ENCODE measurements at regions of chr19 and their contacts with region 1.

Region 1: DNA sequence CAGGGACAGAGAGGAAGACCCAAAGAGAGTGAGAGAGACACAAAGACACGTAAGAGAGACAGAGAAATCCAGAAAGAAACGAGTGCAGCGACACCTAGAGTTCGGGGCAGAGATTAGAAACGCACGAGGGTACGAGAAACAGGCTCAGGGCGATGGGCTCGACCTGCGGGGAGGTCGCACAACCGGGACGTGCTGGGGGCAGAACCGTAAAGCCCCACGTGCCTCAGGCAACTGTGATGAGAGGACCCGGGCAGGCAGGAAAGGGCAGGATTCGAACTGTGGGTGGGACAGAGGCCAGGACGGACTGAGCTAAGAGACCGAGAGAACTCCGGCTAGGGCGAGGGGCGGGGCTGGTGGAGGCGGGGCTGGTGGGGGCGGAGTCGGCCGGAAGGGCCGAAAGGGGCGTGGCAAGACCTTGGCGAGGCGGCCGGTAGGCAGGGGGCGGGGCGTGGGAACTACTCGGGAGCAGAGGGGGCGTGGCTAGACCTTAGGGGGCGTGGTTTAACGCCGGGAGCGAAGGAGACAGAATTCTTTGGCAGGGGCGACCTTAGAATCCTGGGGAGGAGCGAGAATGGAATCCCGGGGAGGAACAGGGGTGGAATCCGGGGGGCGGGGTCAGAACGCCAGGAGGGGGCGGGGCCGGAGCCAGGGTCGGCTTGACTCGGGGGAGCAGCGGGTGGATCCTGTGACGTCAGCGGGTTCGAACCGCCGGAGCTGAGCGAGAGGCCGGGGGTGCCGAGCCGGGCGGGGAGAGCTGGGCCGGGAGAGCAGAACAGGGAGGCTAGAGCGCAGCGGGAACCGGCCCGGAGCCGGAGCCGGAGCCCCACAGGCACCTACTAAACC is at the start of gene NECTIN2:
- DNase-seq: peak; percentile 100
- H3K4me3 ChIP-seq: peak within 1 kb of the TSS; percentile 83 to 100 (median 96)
- H3K27ac ChIP-seq: peak within 1 kb of the TSS; percentile 94 to 98 (median 96)
- H3K4me1 ChIP-seq: peaks cover 0 to 58% (median 39%) of the 10 kb centered on the region in 4 donors
- H3K27me3 ChIP-seq: no peaks in the 10 kb centered on the region
- CTCF ChIP-seq: peak; percentile 56 to 88 (median 82)
- EP300 ChIP-seq: no peak
- POLR2A ChIP-seq: peak; percentile 83 to 88
- total RNA-seq, gene NECTIN2: 16.3 to 39.6 (median 27.3) TPM

Region 2: GRCh38 chr19:44746946-44747738 is 98.7 kb before region 1 on chr19:
- intact Hi-C with region 1: loop called (anchors 5 kb)
- DNase-seq: peak; percentile 98
- H3K4me3 ChIP-seq: peak overlapping the region; percentile 59 to 83 (median 76)
- H3K27ac ChIP-seq: peak overlapping the region; percentile 90 to 98 (median 94)
- H3K4me1 ChIP-seq: peaks cover 0 to 89% (median 79%) of the 10 kb centered on the region in 4 donors
- H3K27me3 ChIP-seq: no peaks in the 10 kb centered on the region
- CTCF ChIP-seq: no peak
- EP300 ChIP-seq: peak in 3 of 4 donors; percentile 36 to 87 (median 61)
- POLR2A ChIP-seq: peak; percentile 58 to 76

Region 3: DNA sequence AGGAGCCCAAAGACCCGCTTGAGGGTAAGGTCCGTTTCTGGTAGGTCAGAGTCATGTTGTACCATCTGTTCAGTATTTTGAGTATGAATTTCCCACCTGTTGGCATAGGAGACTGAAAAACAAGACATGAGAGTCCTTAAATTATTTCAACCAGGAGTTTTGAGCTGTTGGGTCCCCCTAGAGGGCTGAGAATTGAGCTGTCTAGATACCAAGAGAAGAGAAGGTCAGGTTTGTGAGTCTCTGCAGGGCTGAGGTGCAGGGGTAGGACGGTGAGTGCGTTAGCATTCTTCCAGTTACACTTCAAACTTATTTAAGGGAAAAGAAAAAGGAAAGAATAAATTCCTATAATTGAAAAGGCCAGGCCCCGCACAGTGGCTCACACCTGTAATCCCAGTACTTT is 63.1 kb before region 1 on chr19:
- intact Hi-C with region 1: loop called (anchors 1 kb)
- DNase-seq: no peak
- H3K4me3 ChIP-seq: no peak overlapping the region
- H3K27ac ChIP-seq: no peak overlapping the region
- H3K4me1 ChIP-seq: peaks cover 0 to 4% (median 2%) of the 10 kb centered on the region in 4 donors
- H3K27me3 ChIP-seq: peaks cover 4 to 11% (median 5%) of the 10 kb centered on the region in 3 donors
- CTCF ChIP-seq: no peak
- EP300 ChIP-seq: no peak
- POLR2A ChIP-seq: no peak

Region 4: DNA sequence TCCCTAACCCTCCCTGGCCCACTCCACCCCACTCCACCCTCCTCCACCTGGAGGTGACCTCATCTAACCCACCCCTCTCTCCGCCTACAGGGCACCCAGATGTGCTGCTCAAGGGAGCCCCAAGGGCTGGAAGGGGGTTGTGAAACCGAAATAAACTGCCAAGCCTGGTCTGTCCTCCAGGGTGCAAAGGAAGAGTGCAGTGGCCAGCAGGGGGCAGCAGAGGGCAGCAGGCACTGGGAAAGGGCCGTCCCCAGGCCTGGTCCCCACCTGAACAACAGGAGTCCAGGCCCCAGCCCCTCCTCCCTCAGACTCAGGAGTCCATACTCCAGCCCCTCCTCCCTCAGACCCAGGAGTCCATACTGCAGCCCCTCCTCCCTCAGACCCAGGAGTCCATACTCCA is 45.4 kb before region 1 on chr19:
- intact Hi-C with region 1: loop called (anchors 1 kb)
- DNase-seq: peak; percentile 91
- H3K4me3 ChIP-seq: no peak overlapping the region
- H3K27ac ChIP-seq: no peak overlapping the region
- H3K4me1 ChIP-seq: no peaks in the 10 kb centered on the region
- H3K27me3 ChIP-seq: no peaks in the 10 kb centered on the region
- CTCF ChIP-seq: peak; percentile 91 to 97 (median 94)
- EP300 ChIP-seq: no peak
- POLR2A ChIP-seq: no peak

Region 5: GRCh38 chr19:44808463-44809371 is 37.1 kb before region 1 on chr19 and contains the start of gene BCAM:
- intact Hi-C with region 1: loop called (anchors 2 kb)
- DNase-seq: peak; percentile 91
- H3K4me3 ChIP-seq: peak within 1 kb of the TSS; percentile 34 to 55 (median 52)
- H3K27ac ChIP-seq: peak within 1 kb of the TSS; percentile 49 to 77 (median 59)
- H3K4me1 ChIP-seq: peaks cover 0 to 28% (median 20%) of the 10 kb centered on the region in 4 donors
- H3K27me3 ChIP-seq: no peaks in the 10 kb centered on the region
- CTCF ChIP-seq: no peak
- EP300 ChIP-seq: no peak
- POLR2A ChIP-seq: no peak
- total RNA-seq, gene BCAM: 6.1 to 36.3 (median 13.4) TPM

Region 6: GRCh38 chr19:44890366-44891015 is 44.7 kb after region 1 on chr19:
- intact Hi-C with region 1: loop called (anchors 2 kb)
- DNase-seq: no peak
- H3K4me3 ChIP-seq: peak overlapping the region; percentile 50 to 65 (median 58)
- H3K27ac ChIP-seq: peak overlapping the region; percentile 91 to 96 (median 94)
- H3K4me1 ChIP-seq: peaks cover 0 to 26% (median 24%) of the 10 kb centered on the region in 4 donors
- H3K27me3 ChIP-seq: no peaks in the 10 kb centered on the region
- CTCF ChIP-seq: no peak
- EP300 ChIP-seq: peak in 1 of 4 donors; percentile 75
- POLR2A ChIP-seq: no peak

Region 7: DNA sequence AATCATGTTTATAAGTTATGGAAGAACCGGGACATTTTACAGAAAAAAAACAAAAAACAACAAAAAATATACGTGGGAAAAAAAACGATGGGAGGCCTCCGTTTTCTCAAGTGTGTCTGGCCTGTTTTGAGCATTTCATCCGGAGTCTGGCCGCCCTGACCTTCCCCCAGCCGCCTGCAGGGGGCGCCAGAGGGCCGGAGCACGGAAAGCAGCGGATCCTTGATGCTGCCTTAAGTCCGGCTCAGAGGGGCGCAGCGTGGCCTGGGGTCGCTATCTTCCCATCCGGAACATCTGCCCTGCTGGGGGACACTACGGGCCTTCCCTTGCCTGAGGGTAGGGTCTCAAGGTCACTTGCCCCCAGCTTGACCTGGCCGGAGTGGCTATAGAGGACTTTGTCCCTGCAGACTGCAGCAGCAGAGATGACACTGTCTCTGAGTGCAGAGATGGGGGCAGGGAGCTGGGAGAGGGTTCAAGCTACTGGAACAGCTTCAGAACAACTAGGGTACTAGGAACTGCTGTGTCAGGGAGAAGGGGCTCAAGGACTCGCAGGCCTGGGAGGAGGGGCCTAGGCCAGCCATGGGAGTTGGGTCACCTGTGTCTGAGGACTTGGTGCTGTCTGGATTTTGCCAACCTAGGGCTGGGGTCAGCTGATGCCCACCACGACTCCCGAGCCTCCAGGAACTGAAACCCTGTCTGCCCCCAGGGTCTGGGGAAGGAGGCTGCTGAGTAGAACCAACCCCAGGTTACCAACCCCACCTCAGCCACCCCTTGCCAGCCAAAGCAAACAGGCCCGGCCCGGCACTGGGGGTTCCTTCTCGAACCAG is 58.0 kb after region 1 on chr19:
- intact Hi-C with region 1: no loop called
- DNase-seq: peak; percentile 82
- H3K4me3 ChIP-seq: no peak overlapping the region
- H3K27ac ChIP-seq: no peak overlapping the region
- H3K4me1 ChIP-seq: peaks cover 0 to 6% (median 5%) of the 10 kb centered on the region in 4 donors
- H3K27me3 ChIP-seq: peaks cover 9 to 34% (median 24%) of the 10 kb centered on the region in 3 donors
- CTCF ChIP-seq: peak; percentile 82 to 100 (median 96)
- EP300 ChIP-seq: no peak
- POLR2A ChIP-seq: no peak

Region 8: DNA sequence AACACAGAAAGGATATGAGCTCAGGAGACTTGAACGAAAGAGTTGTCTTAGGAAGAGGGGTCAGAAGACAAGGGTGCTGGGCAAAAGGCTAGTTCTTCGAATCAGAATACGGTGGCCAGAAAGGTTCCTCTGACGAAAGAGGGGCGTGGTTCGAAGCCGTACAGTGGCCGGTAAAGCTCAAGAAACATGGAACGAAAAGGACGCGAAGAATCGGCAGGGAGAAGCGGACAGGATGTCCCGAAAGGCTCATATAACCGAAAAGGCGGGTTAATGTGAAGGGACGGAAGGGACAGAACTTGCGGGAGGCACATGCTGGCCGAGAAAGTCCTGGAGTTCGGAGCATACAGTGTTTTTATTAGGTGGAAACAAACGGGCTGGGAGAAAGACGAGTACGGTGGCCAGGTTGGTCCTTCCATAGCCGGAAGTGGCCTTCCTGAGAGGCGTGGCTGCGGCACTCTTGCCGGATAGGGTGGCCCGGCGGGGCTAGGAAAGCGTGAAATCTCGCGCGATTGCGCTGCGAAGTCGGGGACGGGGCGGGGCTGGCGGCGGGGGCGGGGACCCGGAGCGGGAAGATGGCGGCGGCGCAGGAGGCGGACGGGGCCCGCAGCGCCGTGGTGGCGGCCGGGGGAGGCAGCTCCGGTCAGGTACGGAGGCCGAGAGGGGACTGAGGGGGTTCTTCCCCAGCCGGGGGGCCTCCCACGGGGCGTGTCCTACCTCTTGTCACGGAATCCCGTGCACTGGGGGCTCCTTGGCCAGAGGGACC is 109.2 kb after region 1 on chr19 and contains the start of gene CLPTM1:
- intact Hi-C with region 1: loop called (anchors 5 kb)
- DNase-seq: peak; percentile 98
- H3K4me3 ChIP-seq: peak within 1 kb of the TSS; percentile 72 to 96 (median 88)
- H3K27ac ChIP-seq: peak within 1 kb of the TSS; percentile 88 to 95 (median 90)
- H3K4me1 ChIP-seq: peaks cover 0 to 50% (median 46%) of the 10 kb centered on the region in 4 donors
- H3K27me3 ChIP-seq: no peaks in the 10 kb centered on the region
- CTCF ChIP-seq: no peak
- EP300 ChIP-seq: peak in 2 of 4 donors; percentile 15 to 22
- POLR2A ChIP-seq: peak; percentile 55 to 69
- total RNA-seq, gene CLPTM1: 31.6 to 51.5 (median 45.1) TPM

Region 9: DNA sequence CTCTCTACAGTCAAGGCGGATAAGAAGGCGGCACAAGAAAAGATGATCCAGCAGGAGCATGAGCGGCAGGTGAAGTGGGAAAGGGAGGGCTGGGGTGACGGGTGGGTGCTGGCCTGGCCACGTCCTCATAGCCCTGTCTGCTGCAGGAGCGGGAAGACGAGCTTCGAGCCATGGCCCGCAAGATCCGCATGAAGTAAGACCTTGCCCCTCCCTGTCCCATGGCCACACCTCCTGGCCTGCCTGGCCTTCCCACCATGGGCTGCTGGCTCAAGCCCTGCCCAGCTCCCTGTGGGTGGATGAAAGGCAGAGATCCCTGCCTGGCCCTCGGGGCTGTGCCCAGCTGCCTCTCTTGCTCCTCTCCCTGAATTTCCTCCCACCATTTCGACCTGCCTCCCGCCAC is 223.2 kb after region 1 on chr19:
- intact Hi-C with region 1: no loop called
- DNase-seq: no peak
- H3K4me3 ChIP-seq: no peak overlapping the region
- H3K27ac ChIP-seq: no peak overlapping the region
- H3K4me1 ChIP-seq: no peaks in the 10 kb centered on the region
- H3K27me3 ChIP-seq: no peaks in the 10 kb centered on the region
- CTCF ChIP-seq: no peak
- EP300 ChIP-seq: no peak
- POLR2A ChIP-seq: no peak